ENCODE measurements at regions of chr15 and their contacts with region 1.

Region 1: DNA sequence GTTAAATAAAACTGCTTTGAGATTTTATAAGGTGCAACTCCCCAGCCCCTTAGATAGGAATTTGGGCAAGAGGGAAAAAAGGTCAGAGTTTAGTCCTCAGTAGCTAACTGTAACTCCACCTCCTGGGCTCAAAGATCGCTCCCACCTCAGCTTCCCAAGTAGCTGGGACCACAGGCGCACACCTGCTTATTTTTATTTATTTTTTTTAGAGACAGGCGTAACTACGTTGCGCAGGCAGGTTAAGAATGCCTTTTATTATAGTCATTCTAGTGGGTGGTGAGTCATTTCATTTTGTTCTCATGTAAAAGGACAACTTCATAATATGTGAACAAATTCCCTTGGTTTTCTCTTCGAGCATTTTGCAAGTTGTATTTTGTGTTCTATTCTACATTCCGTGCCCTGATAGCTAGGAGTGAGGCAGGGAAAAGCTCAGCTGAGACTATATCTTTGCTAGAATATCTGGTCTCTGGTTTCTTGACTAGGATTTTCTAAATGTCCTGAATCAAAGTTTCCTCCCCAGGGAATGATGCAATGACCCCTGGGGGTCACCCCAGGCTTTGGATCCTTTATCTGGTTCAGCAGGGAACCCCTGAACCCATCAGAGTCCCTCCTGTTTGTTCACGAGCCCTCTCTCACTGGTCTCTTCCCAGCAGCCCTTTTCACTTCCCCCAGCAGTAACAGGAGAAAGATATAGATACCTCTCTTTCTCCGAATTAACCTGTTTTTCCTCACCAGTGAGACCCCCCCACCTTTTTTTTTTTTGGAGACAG is 14.4 kb downstream of the TM2D3 start:
- DNase-seq: no peak
- H3K4me3 ChIP-seq: no peak overlapping the region
- CTCF ChIP-seq: no peak
- POLR2A ChIP-seq: no peak

Region 2: DNA sequence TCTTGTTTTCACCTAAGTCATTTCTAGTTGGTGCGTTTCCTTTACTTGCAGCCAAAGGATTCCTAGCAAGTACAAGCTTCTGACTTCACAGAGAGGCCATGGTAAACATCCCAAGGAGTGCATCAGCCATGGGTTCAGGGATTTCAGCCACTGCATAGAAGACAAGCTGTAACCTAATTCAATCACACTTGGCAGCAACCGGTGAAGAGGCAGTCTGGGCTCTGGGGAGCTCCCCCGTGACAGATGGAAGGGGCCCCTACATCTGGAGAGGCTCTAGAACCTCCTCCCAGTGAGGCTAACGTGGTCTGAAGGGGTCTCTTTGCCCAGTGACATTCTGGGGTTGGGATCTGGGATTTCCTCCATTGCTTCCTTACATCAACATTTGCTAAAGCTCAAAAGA is 334.3 kb before region 1 on chr15:
- intact Hi-C with region 1: loop called (anchors 5 kb)
- DNase-seq: peak in 1 of 2 donors; percentile 61
- H3K4me3 ChIP-seq: no peak overlapping the region
- CTCF ChIP-seq: no peak
- POLR2A ChIP-seq: no peak